ENCODE measurements at regions of chr3 and their contacts with region 1.

Region 1: GRCh38 chr3:71006810-71007785 is 576.4 kb downstream of the FOXP1 start:
- DNase-seq: no peak
- ATAC-seq: no peak
- H3K4me3 ChIP-seq: no peak overlapping the region
- H3K27ac ChIP-seq: no peak overlapping the region
- H3K4me1 ChIP-seq: no peaks in the 10 kb centered on the region
- H3K27me3 ChIP-seq: no peaks in the 10 kb centered on the region
- CTCF ChIP-seq: peak; percentile 58; the same call in 1 of the 2 replicates

Region 2: GRCh38 chr3:70973558-70973957 is 33.5 kb before region 1 on chr3:
- CTCF ChIA-PET with region 1: no interaction called
- POLR2A ChIA-PET with region 1: no interaction called
- in situ Hi-C with region 1: no loop called
- intact Hi-C with region 1: no loop called
- DNase-seq: no peak
- ATAC-seq: no peak
- H3K4me3 ChIP-seq: no peak overlapping the region
- H3K27ac ChIP-seq: no peak overlapping the region
- H3K4me1 ChIP-seq: no peaks in the 10 kb centered on the region
- H3K27me3 ChIP-seq: no peaks in the 10 kb centered on the region
- CTCF ChIP-seq: no peak

Region 3: GRCh38 chr3:71584450-71585011 is 577.4 kb after region 1 on chr3:
- CTCF ChIA-PET with region 1: no interaction called
- POLR2A ChIA-PET with region 1: no interaction called
- in situ Hi-C with region 1: no loop called
- intact Hi-C with region 1: loop called (anchors 5 kb)
- DNase-seq: no peak
- ATAC-seq: no peak
- H3K4me3 ChIP-seq: peak overlapping the region; percentile 53 to 68
- H3K27ac ChIP-seq: no peak overlapping the region
- H3K4me1 ChIP-seq: no peaks in the 10 kb centered on the region
- H3K27me3 ChIP-seq: peaks cover 5% of the 10 kb centered on the region
- CTCF ChIP-seq: no peak